ENCODE measurements at regions of chr21 and their contacts with region 1.

Region 1: GRCh38 chr21:31103571-31104272 is 65.4 kb upstream of the KRTAP19-8 start:
- DNase-seq: no peak
- H3K4me3 ChIP-seq: no peak overlapping the region
- H3K27ac ChIP-seq: peak overlapping the region in 1 of 8 donors; percentile 17
- H3K4me1 ChIP-seq: peaks cover 0 to 26% (median 17%) of the 10 kb centered on the region in 6 donors
- H3K27me3 ChIP-seq: peaks cover 0 to 9% (median 0%) of the 10 kb centered on the region in 7 donors
- CTCF ChIP-seq: no peak
- POLR2A ChIP-seq: no peak

Region 2: GRCh38 chr21:31335957-31336738 is 232.4 kb after region 1 on chr21:
- intact Hi-C with region 1: no loop called
- DNase-seq: no peak
- H3K4me3 ChIP-seq: no peak overlapping the region
- H3K27ac ChIP-seq: no peak overlapping the region
- H3K4me1 ChIP-seq: no peaks in the 10 kb centered on the region
- H3K27me3 ChIP-seq: peaks cover 0 to 5% (median 0%) of the 10 kb centered on the region in 7 donors
- CTCF ChIP-seq: no peak
- POLR2A ChIP-seq: no peak

Region 3: DNA sequence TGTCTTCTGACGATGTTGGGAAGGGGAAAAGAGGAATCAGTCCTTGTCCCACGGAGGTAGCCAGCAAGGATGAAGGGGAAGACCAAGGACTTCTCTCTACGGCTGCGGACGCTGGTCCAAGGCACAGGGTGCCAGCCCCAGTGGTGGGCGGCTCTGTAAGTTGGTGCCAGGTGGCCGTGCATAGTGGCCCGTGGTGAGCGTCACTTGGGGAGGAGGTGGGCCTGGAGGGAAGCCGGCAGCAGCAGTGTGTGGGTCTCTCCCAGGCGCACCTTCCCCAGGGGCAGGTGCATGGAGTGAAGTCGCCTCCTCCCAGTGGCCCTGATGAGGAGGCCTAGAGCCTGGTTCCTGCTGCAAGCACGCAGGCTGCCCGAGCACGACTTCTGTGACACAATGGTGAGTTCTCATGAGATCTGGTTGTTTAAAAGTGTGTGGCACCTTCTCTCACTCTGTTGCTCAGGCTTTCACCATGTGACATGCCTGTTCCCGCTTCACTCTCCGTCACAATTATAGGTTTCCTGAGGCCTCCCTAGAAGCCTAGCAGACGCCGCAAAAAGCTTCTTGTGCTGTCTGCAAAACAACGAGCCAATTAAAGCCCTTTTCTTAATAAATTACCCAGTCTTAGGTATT is 284.0 kb after region 1 on chr21:
- intact Hi-C with region 1: no loop called
- DNase-seq: no peak
- H3K4me3 ChIP-seq: no peak overlapping the region
- H3K27ac ChIP-seq: no peak overlapping the region
- H3K4me1 ChIP-seq: no peaks in the 10 kb centered on the region
- H3K27me3 ChIP-seq: no peaks in the 10 kb centered on the region
- CTCF ChIP-seq: no peak
- POLR2A ChIP-seq: no peak

Region 4: DNA sequence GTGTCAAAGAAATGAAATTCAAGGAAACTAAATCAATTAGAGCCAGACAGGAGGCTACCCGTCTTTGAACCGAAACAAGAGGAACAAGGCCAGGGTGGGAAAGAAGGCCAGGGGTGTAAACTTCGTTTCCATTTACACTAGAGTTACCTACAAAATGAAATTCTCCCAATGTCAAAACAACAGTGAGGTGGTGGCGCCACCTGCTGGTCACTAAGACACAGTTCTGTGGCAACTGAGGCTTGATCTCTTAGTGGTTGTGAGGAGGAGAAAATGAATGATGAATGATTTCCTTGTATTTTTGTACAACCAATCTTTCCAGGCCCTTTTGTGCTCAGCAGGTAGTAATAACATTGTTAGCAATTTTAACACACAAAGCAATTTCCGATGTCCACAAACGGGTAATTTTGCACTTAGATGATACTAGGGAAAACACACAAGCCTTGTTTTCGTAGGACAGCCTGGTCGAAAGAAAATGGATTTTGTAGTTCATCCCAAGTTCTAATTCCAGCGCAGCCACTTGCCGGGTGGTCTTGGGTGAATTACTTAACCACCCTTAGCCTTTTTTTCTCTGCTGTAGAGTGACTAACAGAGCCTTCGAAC is 501.0 kb after region 1 on chr21:
- intact Hi-C with region 1: loop called (anchors 5 kb)
- DNase-seq: peak; percentile 87
- H3K4me3 ChIP-seq: no peak overlapping the region
- H3K27ac ChIP-seq: no peak overlapping the region
- H3K4me1 ChIP-seq: peaks cover 0 to 5% (median 2%) of the 10 kb centered on the region in 6 donors
- H3K27me3 ChIP-seq: no peaks in the 10 kb centered on the region
- CTCF ChIP-seq: peak; percentile 63 to 91 (median 86)
- POLR2A ChIP-seq: no peak

Region 5: DNA sequence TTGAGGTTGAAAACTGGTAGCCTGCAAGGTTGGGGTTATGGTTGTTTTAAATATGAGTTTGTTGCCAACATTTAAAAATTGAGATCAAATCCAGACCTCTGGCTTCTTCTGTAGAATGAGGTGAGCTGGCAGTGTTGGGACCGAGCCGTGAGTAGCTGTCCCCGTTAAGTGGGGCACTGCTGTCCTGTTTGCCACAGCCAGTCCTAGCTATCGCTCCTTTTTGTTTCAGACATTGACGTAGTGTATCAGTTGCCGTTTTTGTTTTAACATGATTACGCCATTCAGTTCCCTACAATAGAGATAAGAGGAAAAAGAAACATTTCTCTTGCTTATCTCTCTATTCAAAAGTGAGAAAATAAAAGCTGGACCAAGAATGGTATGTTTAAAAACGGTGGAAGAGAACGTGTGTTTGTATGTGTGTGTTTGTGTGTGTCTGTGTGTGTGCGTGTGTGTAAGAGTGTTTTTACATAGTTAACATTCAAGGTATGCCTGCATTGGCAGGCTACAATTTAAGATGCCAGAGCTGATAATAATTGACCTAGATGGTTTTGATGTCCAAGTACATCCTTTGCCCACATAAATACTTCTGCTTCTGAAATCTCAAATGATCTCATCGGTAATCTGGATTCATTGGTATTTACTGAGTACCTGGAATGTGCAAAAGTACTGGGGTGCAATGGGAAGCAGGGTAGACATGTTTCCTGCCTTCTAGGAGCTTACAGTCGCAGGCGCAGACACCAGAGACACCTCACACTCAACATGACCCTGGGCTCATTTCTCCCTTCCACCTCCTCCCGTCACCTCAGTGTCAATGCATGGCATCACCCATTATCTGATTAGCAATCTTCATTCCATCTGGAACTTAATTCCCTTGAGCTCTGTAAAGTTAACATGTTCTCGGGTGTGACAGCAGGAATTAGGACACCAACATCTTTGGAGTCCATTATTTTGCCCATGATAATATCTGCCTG is 834.9 kb after region 1 on chr21:
- intact Hi-C with region 1: no loop called
- DNase-seq: no peak
- H3K4me3 ChIP-seq: no peak overlapping the region
- H3K27ac ChIP-seq: no peak overlapping the region
- H3K4me1 ChIP-seq: no peaks in the 10 kb centered on the region
- H3K27me3 ChIP-seq: peaks cover 0 to 23% (median 0%) of the 10 kb centered on the region in 7 donors
- CTCF ChIP-seq: no peak
- POLR2A ChIP-seq: no peak